A549 (cell line): ENCODE measurements at regions of chr17 and their contacts with region 1.

Region 1: DNA sequence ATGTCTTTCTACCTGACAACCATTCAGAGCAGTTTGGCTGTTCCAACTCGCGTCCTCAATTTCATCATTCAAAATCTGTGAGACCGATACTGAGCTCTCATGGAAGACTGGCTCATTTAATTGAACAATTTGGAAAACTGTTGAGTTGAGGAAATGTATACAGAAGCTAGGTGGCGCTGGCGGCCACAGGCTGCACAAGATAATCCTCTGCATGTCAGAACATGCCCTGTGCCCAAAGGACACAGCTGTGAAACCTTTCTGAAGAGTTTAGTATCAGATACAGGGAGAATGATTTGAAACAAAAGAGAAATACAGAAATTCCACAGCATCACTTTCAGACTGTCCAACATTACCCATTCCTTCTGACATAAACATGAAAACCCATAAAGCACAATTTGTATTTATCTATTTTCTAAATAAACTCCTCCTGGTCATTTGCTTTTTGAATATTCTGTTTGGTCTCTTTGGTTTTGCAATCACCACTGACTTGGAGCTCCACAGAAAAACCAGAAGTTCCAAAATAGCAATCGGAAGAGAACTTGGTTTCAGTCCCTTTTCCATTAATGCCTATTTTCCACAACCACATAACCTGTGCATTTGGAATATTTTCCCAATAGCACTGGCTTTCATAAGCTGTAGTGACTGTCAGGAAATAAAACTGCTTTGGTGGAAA is 192.8 kb downstream of the MAP2K6 start:
- DNase-seq: peak; percentile 54 to 85
- ATAC-seq: peak; percentile 81 to 86
- H3K4me3 ChIP-seq: no peak overlapping the region
- H3K27ac ChIP-seq: peak overlapping the region; percentile 79 to 88
- H3K4me1 ChIP-seq: peaks cover 31% of the 10 kb centered on the region
- CTCF ChIP-seq: peak; percentile 96
- EP300 ChIP-seq: no peak
- POLR2A ChIP-seq: no peak
- RAD21 ChIP-seq: peak; percentile 92 to 94

Region 2: GRCh38 chr17:69287168-69287567 is 320.1 kb before region 1 on chr17:
- CTCF ChIA-PET with region 1: no interaction called
- POLR2A ChIA-PET with region 1: no interaction called
- DNase-seq: peak in 1 of 2 experiments; percentile 24
- ATAC-seq: peak; percentile 63 to 68; a peak in 3 of 6 replicates
- H3K4me3 ChIP-seq: no peak overlapping the region
- H3K27ac ChIP-seq: peak overlapping the region in 1 of 2 experiments; percentile 21; a peak in 2 of 6 replicates
- H3K4me1 ChIP-seq: peaks cover 18% of the 10 kb centered on the region
- CTCF ChIP-seq: no peak
- EP300 ChIP-seq: no peak
- POLR2A ChIP-seq: no peak
- RAD21 ChIP-seq: no peak

Region 3: GRCh38 chr17:69581061-69581961 is 26.0 kb before region 1 on chr17:
- CTCF ChIA-PET with region 1: interaction called, 10 read pairs
- POLR2A ChIA-PET with region 1: no interaction called
- DNase-seq: no peak
- ATAC-seq: no peak
- H3K4me3 ChIP-seq: no peak overlapping the region
- H3K27ac ChIP-seq: no peak overlapping the region
- H3K4me1 ChIP-seq: peaks cover 8% of the 10 kb centered on the region; the same call in 2 of the 3 replicates
- CTCF ChIP-seq: no peak
- EP300 ChIP-seq: no peak
- POLR2A ChIP-seq: no peak
- RAD21 ChIP-seq: no peak

Region 4: DNA sequence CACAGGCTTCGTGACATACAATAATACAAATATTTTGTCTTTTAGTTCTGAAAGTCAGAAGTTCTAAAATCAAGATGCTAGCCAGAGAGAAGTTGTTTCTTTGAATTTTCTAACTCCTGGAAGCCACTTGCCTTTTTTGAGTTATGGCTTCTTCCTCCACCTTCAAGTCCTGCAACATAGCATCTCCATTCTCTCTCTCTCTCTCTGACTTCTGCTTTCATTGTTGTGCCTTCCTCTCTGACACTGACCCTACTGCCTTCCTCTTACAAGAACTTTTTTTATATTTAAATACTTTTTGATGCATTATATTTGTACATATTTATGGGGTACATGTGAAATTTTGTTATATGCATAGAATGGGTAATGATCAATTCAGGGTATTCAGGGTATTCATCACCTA is 13.1 kb after region 1 on chr17:
- CTCF ChIA-PET with region 1: interaction called, 13 read pairs
- POLR2A ChIA-PET with region 1: no interaction called
- DNase-seq: no peak
- ATAC-seq: no peak
- H3K4me3 ChIP-seq: no peak overlapping the region
- H3K27ac ChIP-seq: no peak overlapping the region
- H3K4me1 ChIP-seq: no peaks in the 10 kb centered on the region
- CTCF ChIP-seq: no peak
- EP300 ChIP-seq: no peak
- POLR2A ChIP-seq: no peak
- RAD21 ChIP-seq: no peak

Region 5: GRCh38 chr17:70144260-70144846 is 537.1 kb after region 1 on chr17:
- CTCF ChIA-PET with region 1: interaction called, 28 read pairs
- POLR2A ChIA-PET with region 1: no interaction called
- DNase-seq: peak; percentile 15 to 50
- ATAC-seq: no peak
- H3K4me3 ChIP-seq: no peak overlapping the region
- H3K27ac ChIP-seq: no peak overlapping the region
- H3K4me1 ChIP-seq: no peaks in the 10 kb centered on the region
- CTCF ChIP-seq: peak; percentile 94
- EP300 ChIP-seq: no peak
- POLR2A ChIP-seq: no peak
- RAD21 ChIP-seq: peak; percentile 75 to 90

Region 6: GRCh38 chr17:70552230-70552981 is 945.1 kb after region 1 on chr17:
- CTCF ChIA-PET with region 1: interaction called, 15 read pairs
- POLR2A ChIA-PET with region 1: interaction called, 3 read pairs
- DNase-seq: peak; percentile 26 to 42
- ATAC-seq: peak; percentile 57 to 64; a peak in 4 of 6 replicates
- H3K4me3 ChIP-seq: no peak overlapping the region
- H3K27ac ChIP-seq: no peak overlapping the region
- H3K4me1 ChIP-seq: no peaks in the 10 kb centered on the region
- CTCF ChIP-seq: peak; percentile 77
- EP300 ChIP-seq: no peak
- POLR2A ChIP-seq: no peak
- RAD21 ChIP-seq: peak; percentile 68 to 80